ENCODE measurements at regions of chr5 and their contacts with region 1.

Region 1: DNA sequence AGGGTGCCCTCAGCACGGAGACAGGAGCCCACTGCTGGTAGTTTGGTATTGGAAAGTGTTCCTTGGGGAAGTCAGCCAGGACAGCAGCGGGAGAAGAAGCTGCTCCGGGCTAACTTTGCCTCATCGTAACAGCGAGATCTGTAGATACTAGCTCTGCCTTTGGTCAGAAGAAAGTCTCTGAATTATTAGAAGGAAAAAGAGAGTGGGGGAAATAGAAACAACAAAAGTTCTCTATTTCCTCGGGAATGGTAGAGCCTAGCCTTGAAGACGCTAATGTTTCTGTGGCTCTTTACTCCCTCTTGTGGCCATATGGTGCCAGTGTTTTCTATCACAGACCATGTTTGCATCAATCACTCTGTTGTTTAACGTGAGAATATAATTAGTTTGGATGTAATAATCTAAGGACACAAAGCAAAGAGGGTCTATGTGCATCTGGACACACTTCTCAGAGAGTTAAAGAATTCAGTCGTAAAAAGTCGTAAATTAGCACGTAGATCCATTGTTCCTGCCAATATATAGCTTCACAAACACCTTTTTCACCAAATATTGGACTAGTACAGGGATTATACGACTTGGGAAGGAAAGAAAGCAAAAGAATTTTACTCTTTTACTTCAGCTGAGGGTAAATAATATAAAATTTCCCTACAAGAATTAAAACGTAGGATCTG is 40.2 kb upstream of the HSD17B4 start:
- DNase-seq: peak; percentile 48
- ATAC-seq: peak; percentile 94
- H3K4me3 Mint-ChIP-seq: peak overlapping the region; percentile 86
- H3K27ac Mint-ChIP-seq: no peak overlapping the region; the same call in 1 of the 2 replicates
- H3K4me1 Mint-ChIP-seq: peaks cover 6% of the 10 kb centered on the region
- H3K27me3 Mint-ChIP-seq: no peaks in the 10 kb centered on the region
- CTCF ChIP-seq: peak; percentile 84

Region 2: DNA sequence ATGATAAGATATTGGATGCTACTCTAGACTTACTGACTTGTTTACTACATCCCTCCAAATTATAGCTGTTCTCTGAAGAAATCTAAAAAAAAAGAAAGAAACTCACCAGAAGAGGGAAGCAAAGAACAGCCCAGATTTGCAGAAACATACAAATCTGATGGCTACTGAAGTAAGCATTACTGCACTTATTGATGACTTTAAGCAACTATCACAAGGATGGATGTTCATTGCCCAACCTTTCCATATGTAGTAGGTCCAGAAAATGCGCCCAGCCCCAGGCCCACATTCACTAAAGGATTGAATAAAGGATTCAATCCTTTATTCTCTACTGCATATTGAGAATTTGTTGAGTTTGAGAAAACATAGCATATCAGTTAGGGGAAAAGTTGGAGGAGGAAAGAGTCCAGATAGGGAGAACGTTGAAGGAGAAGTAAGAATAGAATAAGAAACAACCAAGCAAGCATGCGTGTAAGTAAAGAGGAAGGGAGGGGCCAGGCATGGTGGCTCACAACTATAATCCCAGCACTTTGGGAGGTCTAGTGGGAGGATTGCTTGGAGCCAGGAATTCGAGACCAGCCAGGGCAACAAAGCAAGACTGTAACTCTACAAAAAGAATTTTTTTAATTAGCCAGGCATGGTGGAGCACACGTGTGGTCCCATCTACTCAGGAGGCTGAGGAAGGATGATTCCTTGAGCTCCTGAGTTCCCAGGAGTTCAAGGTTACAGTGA is 389.9 kb before region 1 on chr5:
- CTCF ChIA-PET with region 1: interaction called, 13 read pairs
- POLR2A ChIA-PET with region 1: no interaction called
- DNase-seq: no peak
- ATAC-seq: peak; percentile 73
- H3K4me3 Mint-ChIP-seq: no peak overlapping the region
- H3K27ac Mint-ChIP-seq: no peak overlapping the region
- H3K4me1 Mint-ChIP-seq: peaks cover 3% of the 10 kb centered on the region; the same call in 1 of the 2 replicates
- H3K27me3 Mint-ChIP-seq: no peaks in the 10 kb centered on the region
- CTCF ChIP-seq: peak; percentile 30

Region 3: DNA sequence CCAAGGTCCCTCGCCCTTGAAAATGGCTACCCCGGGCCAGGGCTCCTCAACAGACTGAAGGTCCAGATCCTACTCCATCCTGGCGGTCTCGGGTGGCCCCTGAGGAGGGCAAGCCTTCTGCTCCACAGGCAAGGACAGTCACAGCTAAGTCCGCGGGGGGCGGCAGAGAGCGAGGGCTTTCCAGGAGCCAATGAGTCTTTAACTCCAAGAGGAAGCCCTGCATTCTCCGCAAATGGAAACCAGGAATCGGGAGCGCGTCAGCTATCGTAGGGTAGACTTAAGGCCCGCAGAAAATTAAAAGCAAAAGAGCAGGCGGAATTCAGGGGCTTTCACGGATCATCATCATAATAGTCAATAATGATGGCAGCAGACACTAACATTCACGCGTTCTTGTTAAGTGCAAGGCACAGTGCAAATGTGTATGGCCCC is 144.1 kb before region 1 on chr5:
- CTCF ChIA-PET with region 1: interaction called, 26 read pairs
- POLR2A ChIA-PET with region 1: interaction called, 7 read pairs
- DNase-seq: peak; percentile 90
- ATAC-seq: peak; percentile 74
- H3K4me3 Mint-ChIP-seq: peak overlapping the region; percentile 96
- H3K27ac Mint-ChIP-seq: peak overlapping the region; percentile 86
- H3K4me1 Mint-ChIP-seq: peaks cover 28% of the 10 kb centered on the region
- H3K27me3 Mint-ChIP-seq: peaks cover 23% of the 10 kb centered on the region
- CTCF ChIP-seq: no peak

Region 4: DNA sequence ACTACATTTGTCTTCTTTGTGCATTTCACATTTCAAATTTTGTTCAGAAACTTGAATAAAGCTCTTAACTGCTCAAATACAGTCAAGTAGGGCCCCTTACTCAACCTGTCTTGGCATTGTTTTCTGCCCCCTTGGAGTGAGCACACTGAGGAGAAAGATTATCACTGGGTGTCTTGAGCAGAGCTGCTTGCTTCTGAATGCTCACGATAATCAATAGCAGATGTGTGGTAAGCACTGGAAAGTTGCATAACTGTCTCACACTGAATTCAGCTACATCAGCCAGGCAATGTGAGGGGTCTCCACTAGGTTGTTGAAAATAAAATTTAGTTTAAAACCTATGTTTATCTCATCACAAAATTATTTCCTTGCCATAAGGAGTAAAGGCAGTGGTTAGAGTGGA is 64.1 kb before region 1 on chr5:
- CTCF ChIA-PET with region 1: interaction called, 10 read pairs
- POLR2A ChIA-PET with region 1: no interaction called
- DNase-seq: no peak
- ATAC-seq: no peak
- H3K4me3 Mint-ChIP-seq: no peak overlapping the region
- H3K27ac Mint-ChIP-seq: peak overlapping the region; percentile 11; the same call in 1 of the 2 replicates
- H3K4me1 Mint-ChIP-seq: peaks cover 74% of the 10 kb centered on the region
- H3K27me3 Mint-ChIP-seq: no peaks in the 10 kb centered on the region
- CTCF ChIP-seq: no peak

Region 5: DNA sequence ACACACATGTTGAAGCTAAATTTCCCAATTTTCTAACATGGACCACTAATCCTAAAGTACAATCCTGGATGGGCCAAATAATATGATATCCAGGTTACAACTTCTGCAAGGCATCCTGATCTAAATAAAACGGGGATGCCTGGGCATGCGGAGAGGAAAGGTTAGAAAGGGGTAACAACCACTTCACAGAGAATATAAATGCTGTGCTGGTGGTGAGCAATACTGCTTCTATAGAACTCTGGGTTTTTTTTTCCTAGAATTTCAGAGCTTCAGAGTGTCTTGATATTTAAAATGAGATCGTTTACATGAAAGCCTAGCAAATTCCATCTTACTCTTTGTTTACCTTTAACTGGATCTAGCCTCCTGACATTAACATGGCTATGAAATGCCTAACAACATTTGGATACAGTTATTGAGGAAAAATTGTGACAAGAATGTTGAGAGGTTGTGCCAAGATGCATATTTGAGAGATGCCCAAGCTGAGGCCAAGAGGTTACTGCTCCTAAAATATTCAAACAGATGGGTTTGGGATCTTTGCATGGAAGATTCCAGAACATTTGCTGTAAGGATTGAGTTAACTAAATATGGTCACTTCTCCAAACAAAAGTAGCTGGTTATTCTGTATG is 33.9 kb before region 1 on chr5:
- CTCF ChIA-PET with region 1: interaction called, 11 read pairs
- POLR2A ChIA-PET with region 1: no interaction called
- DNase-seq: no peak
- ATAC-seq: no peak
- H3K4me3 Mint-ChIP-seq: no peak overlapping the region
- H3K27ac Mint-ChIP-seq: no peak overlapping the region
- H3K4me1 Mint-ChIP-seq: peaks cover 26% of the 10 kb centered on the region
- H3K27me3 Mint-ChIP-seq: no peaks in the 10 kb centered on the region
- CTCF ChIP-seq: no peak

Measured in WTC11 (cell line).